ENCODE measurements at regions of chr12 and their contacts with region 1.

Region 1: GRCh38 chr12:49740930-49741881 is at the start of gene TMBIM6:
- DNase-seq: peak; percentile 96 to 100 (median 96)
- ATAC-seq: peak; percentile 96
- H3K4me3 ChIP-seq: peak within 1 kb of the TSS; percentile 71
- H3K27ac ChIP-seq: peak within 1 kb of the TSS; percentile 99
- H3K4me1 ChIP-seq: peaks cover 10 to 18% of the 10 kb centered on the region in 2 experiments
- H3K27me3 ChIP-seq: no peaks in the 10 kb centered on the region
- CTCF ChIP-seq: peak; percentile 91 to 99 (median 96)
- EP300 ChIP-seq: peak; percentile 48
- POLR2A ChIP-seq: peak; percentile 100
- RAD21 ChIP-seq: peak; percentile 49 to 66
- polyA plus RNA-seq, gene TMBIM6: 1,205 to 1,288 TPM

Region 2: GRCh38 chr12:49673446-49674317 is 67.5 kb before region 1 on chr12:
- CTCF ChIA-PET with region 1: no interaction called
- POLR2A ChIA-PET with region 1: interaction called, 11 read pairs
- in situ Hi-C with region 1: no loop called
- intact Hi-C with region 1: no loop called
- DNase-seq: peak; percentile 84 to 90 (median 88)
- ATAC-seq: peak; percentile 99
- H3K4me3 ChIP-seq: no peak overlapping the region
- H3K27ac ChIP-seq: peak overlapping the region; percentile 61
- H3K4me1 ChIP-seq: peaks cover 20 to 40% of the 10 kb centered on the region in 2 experiments
- H3K27me3 ChIP-seq: no peaks in the 10 kb centered on the region
- CTCF ChIP-seq: peak; percentile 28 to 46 (median 35); a peak in 3 of 6 replicates
- EP300 ChIP-seq: peak; percentile 32; the same call in 1 of the 2 replicates
- POLR2A ChIP-seq: peak; percentile 55; the same call in 1 of the 2 replicates
- RAD21 ChIP-seq: no peak

Region 3: DNA sequence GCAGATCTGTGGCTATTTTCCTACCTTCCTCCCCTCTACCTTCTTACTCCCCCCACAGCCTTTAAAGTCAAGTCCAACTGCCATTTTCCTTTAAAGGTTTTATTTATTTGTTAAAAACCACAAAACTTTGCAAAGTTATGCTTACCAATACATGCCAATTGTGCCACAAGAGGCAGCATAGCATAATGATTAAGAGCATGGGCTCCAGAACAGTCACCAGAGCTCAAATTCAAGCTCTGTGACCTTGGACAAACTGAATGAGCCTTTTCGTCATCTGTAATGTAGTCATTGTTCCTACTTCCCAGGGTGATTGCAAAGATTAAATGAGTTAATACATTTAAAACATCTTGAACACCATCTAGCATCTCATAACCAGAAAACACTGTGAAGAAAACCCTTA is 21.0 kb before region 1 on chr12:
- CTCF ChIA-PET with region 1: no interaction called
- POLR2A ChIA-PET with region 1: interaction called, 17 read pairs
- in situ Hi-C with region 1: no loop called
- intact Hi-C with region 1: no loop called
- DNase-seq: no peak
- ATAC-seq: peak; percentile 47; the same call in 1 of the 3 replicates
- H3K4me3 ChIP-seq: no peak overlapping the region
- H3K27ac ChIP-seq: no peak overlapping the region
- H3K4me1 ChIP-seq: no peaks in the 10 kb centered on the region
- H3K27me3 ChIP-seq: peaks cover 9 to 13% of the 10 kb centered on the region in 2 experiments; a peak in 4 of 5 replicates
- CTCF ChIP-seq: peak in 1 of 3 experiments; percentile 16; a peak in 1 of 6 replicates
- EP300 ChIP-seq: no peak
- POLR2A ChIP-seq: no peak
- RAD21 ChIP-seq: no peak; a peak in 1 of 4 replicates

Region 4: GRCh38 chr12:49763006-49763591 is 21.9 kb after region 1 on chr12:
- CTCF ChIA-PET with region 1: no interaction called
- POLR2A ChIA-PET with region 1: interaction called, 21 read pairs
- in situ Hi-C with region 1: no loop called
- intact Hi-C with region 1: no loop called
- DNase-seq: peak; percentile 68 to 76 (median 71)
- ATAC-seq: peak; percentile 77
- H3K4me3 ChIP-seq: no peak overlapping the region
- H3K27ac ChIP-seq: no peak overlapping the region
- H3K4me1 ChIP-seq: no peaks in the 10 kb centered on the region
- H3K27me3 ChIP-seq: no peaks in the 10 kb centered on the region
- CTCF ChIP-seq: peak; percentile 65 to 82 (median 74)
- EP300 ChIP-seq: no peak
- POLR2A ChIP-seq: no peak
- RAD21 ChIP-seq: 0 out of 4 replicates have a peak, but pooled peaks of 1 of the 2 experiments have one; percentile 7

Region 5: GRCh38 chr12:49828133-49829091 is 87.2 kb after region 1 on chr12 and contains the start of gene NCKAP5L:
- CTCF ChIA-PET with region 1: no interaction called
- POLR2A ChIA-PET with region 1: interaction called, 4 read pairs
- in situ Hi-C with region 1: no loop called
- intact Hi-C with region 1: loop called (anchors 1 kb)
- DNase-seq: peak; percentile 97 to 99 (median 99)
- ATAC-seq: peak; percentile 97
- H3K4me3 ChIP-seq: peak within 1 kb of the TSS; percentile 85
- H3K27ac ChIP-seq: peak within 1 kb of the TSS; percentile 64
- H3K4me1 ChIP-seq: peaks cover 29 to 35% of the 10 kb centered on the region in 2 experiments
- H3K27me3 ChIP-seq: no peaks in the 10 kb centered on the region
- CTCF ChIP-seq: no peak
- EP300 ChIP-seq: no peak; the same call in 1 of the 2 replicates
- POLR2A ChIP-seq: peak; percentile 86
- RAD21 ChIP-seq: no peak
- polyA plus RNA-seq, gene NCKAP5L: 0.01 to 0.04 TPM

Measured in K562 (cell line).